Kidney (tissue), 22 donors: ENCODE measurements at regions of chr12 and their contacts with region 1.

Region 1: DNA sequence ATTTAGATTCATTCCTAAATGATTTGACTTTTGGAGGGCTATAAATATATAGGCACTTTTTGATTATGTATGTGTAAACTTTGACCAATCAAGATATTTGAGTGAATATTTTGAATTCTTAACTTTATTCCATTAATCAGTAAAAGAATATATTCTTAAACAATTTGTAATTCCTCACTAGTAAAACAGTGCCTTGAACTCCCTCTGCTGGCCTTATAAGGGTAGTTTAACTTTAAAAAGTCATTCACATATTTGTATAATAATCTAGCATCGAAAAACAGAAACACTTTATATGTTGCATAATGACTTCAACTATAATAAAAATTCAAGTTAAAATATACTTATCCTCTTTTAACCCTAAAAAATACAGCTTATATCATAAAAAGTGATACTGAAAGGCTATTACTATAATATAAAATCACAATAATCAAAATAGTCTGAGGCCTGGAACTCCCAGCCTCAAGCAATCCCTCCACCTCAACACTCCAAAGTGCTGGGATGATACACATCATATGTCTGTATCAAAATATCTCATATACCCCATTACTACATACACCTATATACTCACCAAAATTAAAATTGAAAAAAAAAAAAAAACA is 31.2 kb downstream of the CCDC59 start:
- DNase-seq: peak in 2 of 5 donors; percentile 40 to 50
- H3K4me3 ChIP-seq: no peak overlapping the region
- H3K27ac ChIP-seq: no peak overlapping the region
- H3K4me1 ChIP-seq: no peaks in the 10 kb centered on the region
- H3K27me3 ChIP-seq: no peaks in the 10 kb centered on the region
- CTCF ChIP-seq: peak; percentile 25

Region 2: GRCh38 chr12:81644503-81644902 is 682.5 kb before region 1 on chr12:
- intact Hi-C with region 1: loop called (anchors 10 kb)
- DNase-seq: peak in 2 of 5 donors; percentile 57 to 66
- H3K4me3 ChIP-seq: no peak overlapping the region
- H3K27ac ChIP-seq: no peak overlapping the region
- H3K4me1 ChIP-seq: no peaks in the 10 kb centered on the region
- H3K27me3 ChIP-seq: no peaks in the 10 kb centered on the region
- CTCF ChIP-seq: peak; percentile 44

Region 3: DNA sequence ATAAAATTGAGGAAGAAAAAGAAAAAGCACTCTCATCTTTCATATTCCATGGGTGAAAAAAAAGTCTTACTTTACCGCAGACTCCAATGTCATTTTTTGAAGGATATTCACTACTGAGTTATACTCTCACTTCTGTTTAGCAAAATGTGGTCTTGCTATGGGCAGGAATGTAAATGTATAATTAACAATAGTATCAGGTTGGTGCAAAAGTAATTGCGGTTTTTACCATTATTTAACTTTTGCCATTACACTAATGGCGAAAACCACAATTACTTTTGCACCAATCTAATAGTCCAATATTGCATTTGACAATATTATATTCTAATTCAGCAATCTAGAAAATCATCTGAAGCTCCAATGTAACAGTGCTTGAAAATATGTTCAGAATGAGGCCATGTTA is 62.3 kb before region 1 on chr12:
- intact Hi-C with region 1: no loop called
- DNase-seq: no peak
- H3K4me3 ChIP-seq: no peak overlapping the region
- H3K27ac ChIP-seq: no peak overlapping the region
- H3K4me1 ChIP-seq: no peaks in the 10 kb centered on the region
- H3K27me3 ChIP-seq: no peaks in the 10 kb centered on the region
- CTCF ChIP-seq: no peak